Mammary epithelial cell (primary cell): ENCODE measurements at regions of chr17 and their contacts with region 1.

Region 1: GRCh38 chr17:55852734-55853133 is 101.9 kb downstream of the PCTP start:
- DNase-seq: no peak
- H3K4me3 ChIP-seq: no peak overlapping the region
- H3K27ac ChIP-seq: no peak overlapping the region
- H3K4me1 ChIP-seq: no peaks in the 10 kb centered on the region
- H3K27me3 ChIP-seq: peaks cover 2% of the 10 kb centered on the region
- CTCF ChIP-seq: no peak

Region 2: GRCh38 chr17:55705849-55706248 is 146.9 kb before region 1 on chr17:
- CTCF ChIA-PET with region 1: no interaction called
- dilution Hi-C with region 1: no loop called
- in situ Hi-C with region 1: no loop called
- intact Hi-C with region 1: no loop called
- DNase-seq: peak; percentile 46
- H3K4me3 ChIP-seq: no peak overlapping the region
- H3K27ac ChIP-seq: no peak overlapping the region
- H3K4me1 ChIP-seq: no peaks in the 10 kb centered on the region
- H3K27me3 ChIP-seq: no peaks in the 10 kb centered on the region
- CTCF ChIP-seq: no peak

Region 3: DNA sequence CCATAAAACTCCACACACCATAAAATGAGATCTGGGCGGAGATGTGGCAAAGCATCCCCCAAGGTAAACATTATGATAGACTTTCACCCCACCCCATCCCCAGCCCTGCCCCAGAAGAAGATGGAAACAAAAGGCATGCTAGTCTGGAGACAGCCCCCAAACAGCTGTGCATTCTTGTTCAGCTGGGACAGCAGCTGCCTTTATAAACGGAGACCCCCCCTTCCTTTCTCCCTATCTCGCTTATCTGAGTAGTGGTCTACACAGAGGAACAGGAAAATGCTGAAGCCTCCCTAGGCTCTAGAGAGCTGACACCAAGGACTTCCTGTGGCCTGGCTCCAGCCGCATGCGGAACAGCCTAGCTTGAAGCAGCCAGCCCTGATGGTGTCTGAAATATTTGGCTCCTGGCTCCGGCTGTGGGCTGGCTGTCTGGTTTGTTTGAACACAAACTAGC is 110.2 kb after region 1 on chr17:
- CTCF ChIA-PET with region 1: no interaction called
- dilution Hi-C with region 1: no loop called
- in situ Hi-C with region 1: no loop called
- intact Hi-C with region 1: loop called (anchors 10 kb)
- DNase-seq: no peak
- H3K4me3 ChIP-seq: no peak overlapping the region
- H3K27ac ChIP-seq: no peak overlapping the region
- H3K4me1 ChIP-seq: peaks cover 6% of the 10 kb centered on the region
- H3K27me3 ChIP-seq: no peaks in the 10 kb centered on the region
- CTCF ChIP-seq: no peak

Region 4: DNA sequence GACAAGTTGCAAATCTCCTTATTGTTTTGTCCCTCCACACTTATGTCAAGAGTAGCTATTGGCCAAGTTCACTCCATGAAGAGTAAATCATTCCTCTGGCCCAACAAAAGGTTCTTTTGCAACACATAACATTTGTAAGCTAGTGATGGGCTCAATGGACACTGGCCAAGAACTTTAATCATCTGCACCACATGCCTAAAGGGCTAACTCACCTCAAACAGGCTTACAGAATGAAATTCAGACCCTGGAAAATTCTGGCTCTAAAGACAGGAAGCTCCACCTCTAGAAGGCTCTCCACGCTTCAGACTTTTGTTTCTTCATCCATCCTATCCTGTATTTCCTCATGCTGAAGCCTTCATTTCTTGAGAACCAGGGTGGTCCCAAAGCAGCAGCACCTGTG is 289.6 kb after region 1 on chr17:
- CTCF ChIA-PET with region 1: no interaction called
- dilution Hi-C with region 1: no loop called
- in situ Hi-C with region 1: no loop called
- intact Hi-C with region 1: no loop called
- DNase-seq: peak; percentile 18
- H3K4me3 ChIP-seq: no peak overlapping the region
- H3K27ac ChIP-seq: no peak overlapping the region
- H3K4me1 ChIP-seq: no peaks in the 10 kb centered on the region
- H3K27me3 ChIP-seq: no peaks in the 10 kb centered on the region
- CTCF ChIP-seq: no peak